Gastrocnemius medialis (tissue), 4 donors: ENCODE measurements at regions of chr10 and their contacts with region 1.

Region 1: DNA sequence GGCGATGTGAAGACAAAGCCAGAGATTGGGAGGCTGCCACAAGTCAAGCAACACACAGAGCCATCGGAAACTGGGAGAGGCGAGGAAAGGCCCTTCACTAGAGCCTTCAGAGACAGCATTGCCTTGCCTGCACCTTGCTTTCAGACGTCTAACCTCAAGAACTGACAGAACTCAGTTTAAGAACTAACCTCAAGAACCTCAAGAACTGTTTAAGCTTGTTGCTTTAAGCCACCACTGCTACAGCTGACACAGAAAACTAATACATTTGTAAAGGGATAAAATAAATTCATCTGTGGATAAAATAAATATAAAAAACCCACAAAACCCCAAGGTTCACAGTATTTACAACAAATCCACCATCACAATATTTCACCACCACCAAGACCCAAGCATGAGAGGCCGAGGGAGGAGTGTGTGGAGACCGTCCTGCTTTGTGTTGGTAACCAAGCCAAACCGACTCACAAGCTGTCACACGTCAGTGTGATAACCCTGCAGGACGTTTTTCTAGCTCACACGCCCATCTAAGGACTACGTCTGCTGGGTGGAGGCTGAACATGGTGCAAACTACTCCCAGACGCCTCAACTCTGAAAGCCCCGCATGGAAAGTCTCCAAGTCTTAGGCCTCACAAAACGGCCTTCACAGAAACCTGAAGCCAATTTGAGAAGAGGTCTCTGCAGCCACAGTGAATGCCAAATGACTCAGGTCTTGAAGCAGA is 116.8 kb downstream of the ABLIM1 start:
- DNase-seq: peak; percentile 57 to 83
- ATAC-seq: peak; percentile 80 to 86
- H3K4me3 ChIP-seq: no peak overlapping the region
- H3K27ac ChIP-seq: peak overlapping the region; percentile 61 to 74 (median 72)
- H3K4me1 ChIP-seq: peaks cover 8 to 19% of the 10 kb centered on the region in 2 donors
- H3K27me3 ChIP-seq: no peaks in the 10 kb centered on the region
- CTCF ChIP-seq: no peak
- POLR2A ChIP-seq: peak in 1 of 2 donors; percentile 52

Region 2: GRCh38 chr10:113399065-113399464 is 1142.2 kb before region 1 on chr10:
- in situ Hi-C with region 1: no loop called
- intact Hi-C with region 1: no loop called
- DNase-seq: no peak
- ATAC-seq: no peak
- H3K4me3 ChIP-seq: no peak overlapping the region
- H3K27ac ChIP-seq: no peak overlapping the region
- H3K4me1 ChIP-seq: no peaks in the 10 kb centered on the region
- H3K27me3 ChIP-seq: no peaks in the 10 kb centered on the region
- CTCF ChIP-seq: no peak
- POLR2A ChIP-seq: no peak

Region 3: DNA sequence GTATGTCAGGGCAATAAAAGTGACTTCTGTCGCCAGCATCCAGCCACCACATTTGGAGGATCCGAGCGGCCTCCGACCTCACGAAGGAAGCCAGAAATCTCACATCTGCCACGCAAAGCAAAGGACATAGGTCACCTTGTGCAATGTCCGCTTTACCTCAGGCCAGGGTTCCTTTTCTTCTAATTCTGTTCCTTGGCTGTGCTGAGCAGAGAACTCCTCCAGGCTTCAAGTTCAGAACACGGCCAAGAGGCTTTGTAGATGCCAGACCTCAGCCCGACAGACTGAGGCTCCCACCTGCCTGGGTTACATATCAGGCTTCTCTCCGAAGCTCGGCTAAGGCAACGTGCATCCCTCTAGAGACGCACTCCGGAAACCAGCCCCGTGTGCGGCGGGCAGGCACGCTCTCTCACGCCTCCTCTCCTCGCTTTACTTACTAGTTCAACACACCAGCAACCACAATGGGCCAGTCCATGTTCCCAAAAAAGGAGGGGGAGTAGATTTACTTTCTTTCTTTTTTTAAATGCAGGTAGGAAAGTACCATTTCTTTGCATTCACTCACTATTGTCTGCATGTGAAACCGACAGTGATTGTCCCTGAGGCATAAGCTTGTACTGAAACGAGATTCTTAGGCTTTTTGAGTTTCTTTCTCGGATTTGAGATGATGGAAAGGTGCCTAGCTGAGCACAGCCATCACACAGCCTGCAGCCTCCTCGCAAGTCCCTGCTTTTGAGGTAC is 14.6 kb before region 1 on chr10:
- in situ Hi-C with region 1: no loop called
- intact Hi-C with region 1: loop called (anchors 2 kb)
- DNase-seq: peak; percentile 59 to 75
- ATAC-seq: peak; percentile 75 to 86
- H3K4me3 ChIP-seq: peak overlapping the region; percentile 31 to 43 (median 34)
- H3K27ac ChIP-seq: peak overlapping the region; percentile 60 to 67 (median 64)
- H3K4me1 ChIP-seq: peaks cover 18 to 23% of the 10 kb centered on the region in 2 donors
- H3K27me3 ChIP-seq: no peaks in the 10 kb centered on the region
- CTCF ChIP-seq: no peak
- POLR2A ChIP-seq: peak; percentile 43 to 71

Region 4: DNA sequence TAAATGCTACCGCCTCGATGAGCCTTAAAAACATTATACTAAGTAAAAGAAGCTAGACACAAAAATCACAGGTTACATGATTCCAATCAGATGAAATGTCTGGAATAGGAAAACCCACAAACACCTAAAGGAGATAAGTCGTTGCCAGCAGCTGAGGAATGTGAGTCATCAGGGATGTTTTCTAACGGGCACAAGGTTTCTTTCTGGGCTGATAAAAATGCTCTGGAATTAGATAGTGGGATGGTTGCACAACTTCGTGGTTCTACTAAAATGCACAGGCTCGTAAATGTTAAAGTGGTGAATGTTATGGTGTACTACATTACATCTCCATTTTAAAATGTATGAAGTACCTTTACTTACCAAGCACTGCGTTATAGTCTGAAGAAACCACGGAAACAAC is 107.1 kb after region 1 on chr10:
- in situ Hi-C with region 1: no loop called
- intact Hi-C with region 1: no loop called
- DNase-seq: no peak
- ATAC-seq: no peak
- H3K4me3 ChIP-seq: no peak overlapping the region
- H3K27ac ChIP-seq: peak overlapping the region; percentile 41 to 70 (median 52)
- H3K4me1 ChIP-seq: peaks cover 7 to 34% of the 10 kb centered on the region in 2 donors
- H3K27me3 ChIP-seq: no peaks in the 10 kb centered on the region
- CTCF ChIP-seq: no peak
- POLR2A ChIP-seq: no peak